SK-N-SH (cell line): ENCODE measurements at regions of chr19 and their contacts with region 1.

Region 1: GRCh38 chr19:34633802-34634201 is 43.2 kb downstream of the SCGB2B2 start:
- DNase-seq: no peak
- H3K4me3 ChIP-seq: no peak overlapping the region
- H3K27ac ChIP-seq: no peak overlapping the region
- H3K4me1 ChIP-seq: no peaks in the 10 kb centered on the region
- H3K27me3 ChIP-seq: no peaks in the 10 kb centered on the region
- CTCF ChIP-seq: no peak
- EP300 ChIP-seq: no peak
- RAD21 ChIP-seq: no peak

Region 2: DNA sequence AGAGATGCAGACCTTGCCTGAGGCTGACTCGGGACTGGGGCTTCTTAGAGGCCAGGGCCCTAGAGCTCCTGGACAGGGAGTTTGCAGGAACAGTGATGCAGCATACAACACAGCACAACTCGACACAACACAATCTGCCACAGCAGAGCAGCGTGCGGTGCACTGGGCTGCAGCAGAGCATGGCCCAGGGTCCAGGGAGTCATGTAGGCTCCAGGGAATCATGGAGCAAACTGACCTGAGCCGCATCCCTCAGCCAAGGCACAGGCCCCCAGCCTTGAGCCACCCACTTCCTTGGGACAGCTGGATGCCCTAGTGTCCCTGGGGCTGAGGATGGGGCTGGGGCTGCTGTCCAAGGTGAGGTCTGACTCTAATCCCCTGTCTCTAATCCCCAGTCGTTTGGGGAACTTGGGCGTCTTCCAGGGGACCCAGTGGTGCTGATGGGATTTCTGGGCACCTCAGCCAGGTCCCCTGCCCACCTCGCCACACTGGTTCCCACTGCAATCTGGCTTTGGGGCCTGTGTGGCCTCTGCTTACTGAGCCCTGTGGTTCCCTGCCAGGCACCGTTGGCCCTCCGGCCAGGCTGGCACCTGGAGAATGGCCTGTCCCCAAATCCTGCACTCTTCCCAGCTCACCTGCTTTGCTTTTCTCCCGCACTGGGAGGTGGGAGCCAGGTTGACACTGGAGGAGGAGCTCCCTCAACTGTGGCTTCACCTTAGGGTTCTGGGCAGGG is 54.0 kb before region 1 on chr19:
- CTCF ChIA-PET with region 1: no interaction called
- POLR2A ChIA-PET with region 1: no interaction called
- DNase-seq: no peak
- H3K4me3 ChIP-seq: no peak overlapping the region
- H3K27ac ChIP-seq: no peak overlapping the region
- H3K4me1 ChIP-seq: no peaks in the 10 kb centered on the region
- H3K27me3 ChIP-seq: no peaks in the 10 kb centered on the region
- CTCF ChIP-seq: no peak
- EP300 ChIP-seq: no peak
- RAD21 ChIP-seq: no peak

Region 3: DNA sequence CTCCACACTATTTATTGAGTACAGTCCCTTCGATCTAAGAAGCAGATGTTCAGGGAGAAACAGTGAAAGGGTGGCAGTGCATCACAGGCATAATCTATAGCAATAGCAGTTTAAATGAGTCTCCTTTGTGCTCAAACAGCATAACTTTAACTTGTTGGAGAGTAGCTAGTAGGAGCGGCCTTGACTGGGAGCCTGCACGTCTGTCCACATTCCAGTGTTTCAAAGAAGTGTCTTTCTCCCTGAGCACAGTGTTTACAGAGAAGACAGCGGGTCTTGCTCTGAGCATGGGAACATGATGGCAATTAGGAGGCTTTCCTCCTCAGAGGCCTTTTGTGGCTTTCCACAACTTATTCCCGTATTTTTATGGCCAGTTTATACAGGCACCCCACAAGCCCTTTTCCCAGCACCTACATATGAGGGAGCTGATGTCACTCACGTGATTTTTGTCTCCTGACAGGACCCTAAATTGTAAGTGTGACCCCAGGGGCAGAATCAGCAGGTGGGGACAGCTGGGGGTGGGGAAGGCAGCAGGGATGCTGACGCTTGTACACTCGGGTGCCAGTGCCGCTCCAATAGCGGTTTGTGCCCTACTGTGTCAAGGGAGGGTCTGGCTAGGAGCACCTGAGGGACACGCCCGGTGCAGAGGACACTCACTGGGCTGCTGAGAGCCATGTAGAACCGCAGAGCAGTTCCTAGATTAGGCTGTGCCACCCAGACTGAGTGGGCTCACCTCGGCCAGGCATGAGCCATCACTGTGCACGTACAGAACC is 38.3 kb before region 1 on chr19:
- CTCF ChIA-PET with region 1: no interaction called
- POLR2A ChIA-PET with region 1: no interaction called
- DNase-seq: no peak
- H3K4me3 ChIP-seq: no peak overlapping the region
- H3K27ac ChIP-seq: no peak overlapping the region
- H3K4me1 ChIP-seq: no peaks in the 10 kb centered on the region; a peak in 1 of 4 replicates
- H3K27me3 ChIP-seq: no peaks in the 10 kb centered on the region
- CTCF ChIP-seq: no peak
- EP300 ChIP-seq: no peak
- RAD21 ChIP-seq: no peak

Region 4: DNA sequence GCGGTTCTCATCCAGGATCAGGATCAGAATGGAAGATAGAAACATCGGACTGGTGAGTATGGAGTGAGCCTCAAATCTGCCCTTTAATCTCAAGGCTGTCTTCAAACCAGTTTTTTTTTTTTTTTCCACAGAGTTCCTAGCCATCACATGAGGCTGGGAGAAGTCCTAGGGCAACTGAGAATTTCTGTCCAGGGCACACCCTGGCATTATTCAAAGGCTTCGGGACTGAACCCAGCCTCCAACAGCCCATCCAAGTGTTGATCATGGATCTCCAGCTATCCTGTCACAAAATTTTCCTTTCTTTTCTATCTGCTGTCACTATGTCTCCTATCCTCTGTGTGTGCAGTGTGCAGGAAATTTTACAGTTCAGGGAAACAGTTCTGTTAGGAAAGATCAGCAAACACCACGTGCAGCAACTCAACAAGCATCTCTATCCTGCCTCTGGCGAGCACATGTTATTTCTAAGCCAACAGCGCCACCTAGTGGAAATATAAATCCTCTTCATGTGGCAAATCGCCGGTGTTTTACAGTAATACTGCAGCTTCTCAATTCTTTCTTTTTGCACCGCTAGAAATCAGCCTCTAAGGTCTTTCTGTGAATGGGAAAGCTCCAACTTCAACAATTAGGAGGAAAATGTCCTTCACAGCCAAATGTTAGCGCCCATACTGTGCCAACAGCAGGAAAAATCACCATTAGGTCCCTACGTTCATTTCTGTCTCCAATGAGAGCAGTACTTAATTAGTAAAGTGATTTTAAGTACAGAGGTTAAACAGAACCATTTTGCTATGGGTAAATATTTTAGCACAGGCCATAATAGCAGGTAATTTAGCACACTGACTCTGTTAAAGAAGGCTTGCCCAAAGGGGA is 78.8 kb after region 1 on chr19:
- CTCF ChIA-PET with region 1: interaction called, 73 read pairs
- POLR2A ChIA-PET with region 1: no interaction called
- DNase-seq: peak; percentile 55
- H3K4me3 ChIP-seq: peak overlapping the region in 1 of 2 experiments; percentile 21; a peak in 2 of 4 replicates
- H3K27ac ChIP-seq: no peak overlapping the region
- H3K4me1 ChIP-seq: no peaks in the 10 kb centered on the region
- H3K27me3 ChIP-seq: no peaks in the 10 kb centered on the region
- CTCF ChIP-seq: peak; percentile 71
- EP300 ChIP-seq: no peak
- RAD21 ChIP-seq: peak; percentile 87